ENCODE measurements at regions of chr1 and their contacts with region 1.

Region 1: GRCh38 chr1:28505406-28506187 is at the start of gene RCC1:
- DNase-seq: peak; percentile 97 to 99
- H3K4me3 ChIP-seq: peak within 1 kb of the TSS; percentile 72 to 82
- H3K27ac ChIP-seq: peak within 1 kb of the TSS; percentile 72
- H3K4me1 ChIP-seq: peaks cover 34% of the 10 kb centered on the region
- H3K27me3 ChIP-seq: no peaks in the 10 kb centered on the region
- CTCF ChIP-seq: peak in 1 of 3 experiments; percentile 4
- POLR2A ChIP-seq: peak in 1 of 2 donors; percentile 97
- total RNA-seq, gene RCC1: 23.8 TPM

Region 2: GRCh38 chr1:28417429-28417922 is 88.1 kb before region 1 on chr1:
- intact Hi-C with region 1: loop called (anchors 10 kb)
- DNase-seq: no peak
- H3K4me3 ChIP-seq: no peak overlapping the region
- H3K27ac ChIP-seq: peak overlapping the region; percentile 26
- H3K4me1 ChIP-seq: peaks cover 4% of the 10 kb centered on the region
- H3K27me3 ChIP-seq: no peaks in the 10 kb centered on the region
- CTCF ChIP-seq: no peak
- POLR2A ChIP-seq: no peak

Region 3: GRCh38 chr1:28437934-28438699 is 67.5 kb before region 1 on chr1:
- intact Hi-C with region 1: no loop called
- DNase-seq: peak in 1 of 2 donors; percentile 87
- H3K4me3 ChIP-seq: peak overlapping the region; percentile 3 to 32
- H3K27ac ChIP-seq: peak overlapping the region; percentile 70
- H3K4me1 ChIP-seq: peaks cover 36% of the 10 kb centered on the region
- H3K27me3 ChIP-seq: no peaks in the 10 kb centered on the region
- CTCF ChIP-seq: no peak
- POLR2A ChIP-seq: peak in 1 of 2 donors; percentile 24

Measured in vagina (tissue), 2 donors.